Mucosa of descending colon (tissue), 3 donors: ENCODE measurements at regions of chr1 and their contacts with region 1.

Region 1: GRCh38 chr1:115112496-115113375 is 23.4 kb upstream of the TSPAN2 start:
- DNase-seq: peak in 2 of 3 donors; percentile 49 to 66
- ATAC-seq: peak; percentile 75
- H3K4me3 ChIP-seq: no peak overlapping the region
- H3K4me1 ChIP-seq: no peaks in the 10 kb centered on the region
- CTCF ChIP-seq: peak; percentile 92

Region 2: DNA sequence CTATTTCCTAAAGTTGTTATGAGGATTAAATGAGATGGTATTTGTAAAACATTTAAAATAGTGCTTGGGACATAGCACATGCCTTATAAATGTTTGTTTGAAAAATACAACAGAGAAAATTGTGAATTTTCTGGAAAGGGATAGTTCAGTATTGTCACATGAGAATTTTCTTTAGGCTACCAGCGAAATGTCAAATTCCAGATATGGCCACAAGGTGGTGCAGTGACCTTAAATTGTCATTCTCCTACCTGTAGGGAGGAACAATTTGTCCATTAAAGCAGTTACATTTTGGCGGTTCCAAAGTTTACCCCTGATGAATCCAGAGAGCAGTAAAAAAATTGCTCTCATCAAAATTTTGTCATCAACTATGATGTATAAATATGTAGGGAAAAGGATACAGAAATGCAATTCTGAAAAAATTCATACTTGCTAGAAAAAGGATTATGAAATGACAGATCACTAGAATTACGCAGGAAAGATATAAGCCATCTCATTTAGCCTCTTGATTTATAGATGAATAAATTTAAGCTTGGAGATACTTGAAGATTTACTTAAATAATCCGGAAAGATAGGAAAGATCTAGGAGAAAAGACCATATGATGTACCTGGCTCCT is 133.4 kb before region 1 on chr1:
- intact Hi-C with region 1: loop called (anchors 2 to 5 kb)
- DNase-seq: peak in 2 of 3 donors; percentile 28 to 89
- ATAC-seq: peak; percentile 54
- H3K4me3 ChIP-seq: no peak overlapping the region
- H3K4me1 ChIP-seq: no peaks in the 10 kb centered on the region
- CTCF ChIP-seq: peak; percentile 49

Region 3: DNA sequence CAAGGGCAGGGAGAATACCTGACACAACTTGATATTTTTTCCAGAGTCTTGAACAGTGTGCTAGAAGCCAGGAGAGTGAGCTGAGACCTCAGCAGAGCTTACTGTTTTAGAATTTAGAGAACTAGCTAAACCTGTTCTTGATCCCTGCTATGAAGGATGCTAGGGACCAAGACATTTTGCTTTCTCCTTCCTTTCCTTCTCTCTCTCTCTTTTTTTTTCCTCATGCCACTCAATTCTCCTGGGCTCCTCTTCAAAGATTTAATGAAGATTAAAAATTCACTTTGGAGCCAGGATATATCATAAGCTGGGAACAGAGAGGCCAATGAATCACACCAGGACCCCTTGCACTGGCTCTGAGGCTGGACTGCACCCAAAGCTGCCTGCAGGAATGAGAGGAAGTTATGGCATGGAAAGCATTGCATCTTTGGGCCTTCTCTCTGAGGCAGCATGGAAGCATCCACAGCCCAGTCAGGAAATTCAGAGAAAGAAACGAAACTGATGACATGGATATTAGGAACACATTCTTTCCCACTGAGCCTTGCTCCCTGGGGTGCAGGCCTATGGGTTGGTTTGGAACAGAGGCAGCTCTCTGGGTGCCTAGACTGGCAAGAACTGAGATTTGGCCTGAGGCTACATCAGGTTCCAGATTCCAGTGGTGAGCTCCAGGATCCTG is 126.5 kb after region 1 on chr1:
- intact Hi-C with region 1: no loop called
- DNase-seq: no peak
- ATAC-seq: no peak
- H3K4me3 ChIP-seq: no peak overlapping the region
- H3K4me1 ChIP-seq: no peaks in the 10 kb centered on the region
- CTCF ChIP-seq: no peak